Common myeloid progenitor, CD34-positive (primary cell): ENCODE measurements at regions of chr19 and their contacts with region 1.

Region 1: GRCh38 chr19:40662921-40663694 is 27.3 kb downstream of the NUMBL start:
- DNase-seq: peak; percentile 86 to 92 (median 91)
- H3K4me3 ChIP-seq: peak overlapping the region; percentile 61 to 84 (median 72)
- H3K27ac ChIP-seq: peak overlapping the region in 1 of 2 experiments; percentile 66
- H3K4me1 ChIP-seq: peaks cover 0 to 17% (median 12%) of the 10 kb centered on the region in 4 experiments
- H3K27me3 ChIP-seq: no peaks in the 10 kb centered on the region

Region 2: GRCh38 chr19:40677156-40677555 is 14.0 kb after region 1 on chr19:
- CTCF ChIA-PET with region 1: no interaction called
- POLR2A ChIA-PET with region 1: no interaction called
- DNase-seq: no peak
- H3K4me3 ChIP-seq: no peak overlapping the region
- H3K27ac ChIP-seq: no peak overlapping the region
- H3K4me1 ChIP-seq: peaks cover 0 to 4% (median 0%) of the 10 kb centered on the region in 4 experiments
- H3K27me3 ChIP-seq: no peaks in the 10 kb centered on the region

Region 3: DNA sequence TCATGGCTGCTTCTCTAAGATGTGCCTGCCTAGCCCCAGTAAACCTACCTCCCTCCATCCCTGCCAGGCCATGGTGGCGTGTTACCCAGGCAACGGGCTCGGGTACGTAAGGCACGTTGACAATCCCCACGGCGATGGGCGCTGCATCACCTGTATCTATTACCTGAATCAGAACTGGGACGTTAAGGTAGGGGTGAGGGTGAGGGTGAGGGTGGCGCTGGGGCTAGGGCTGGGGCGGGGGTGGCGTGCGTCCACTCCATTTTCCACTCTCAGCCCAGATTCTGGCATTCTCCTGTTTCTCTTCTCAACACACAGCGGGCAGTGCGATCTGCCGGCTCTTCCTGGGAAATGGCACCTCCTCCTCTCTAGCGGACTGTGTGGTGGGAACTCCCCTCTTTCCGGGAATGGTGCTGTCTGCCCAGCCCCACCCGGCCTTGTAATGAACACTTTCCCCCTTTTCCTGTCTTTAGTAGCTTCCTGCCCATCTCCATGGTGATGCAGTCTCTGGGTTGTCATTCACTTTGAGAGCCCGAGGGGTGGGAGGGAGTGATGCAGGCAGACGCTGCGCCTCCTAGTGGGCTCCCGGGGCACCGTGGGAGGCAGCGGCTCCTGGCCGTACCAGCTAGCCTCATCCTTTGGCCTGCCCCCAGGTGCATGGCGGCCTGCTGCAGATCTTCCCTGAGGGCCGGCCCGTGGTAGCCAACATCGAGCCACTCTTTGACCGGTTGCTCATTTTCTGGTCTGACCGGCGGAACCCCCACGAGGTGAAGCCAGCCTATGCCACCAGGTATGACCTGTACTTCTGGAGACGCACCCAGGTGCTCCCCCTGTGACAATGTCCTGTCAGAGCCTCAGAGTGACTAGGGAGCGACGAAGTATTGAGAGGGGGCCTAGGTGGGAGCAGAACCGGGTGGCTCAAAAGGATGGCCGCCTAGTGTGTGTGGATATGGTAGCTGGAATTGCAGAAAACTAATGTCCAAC is 143.7 kb after region 1 on chr19:
- CTCF ChIA-PET with region 1: interaction called, 20 read pairs
- POLR2A ChIA-PET with region 1: no interaction called
- DNase-seq: peak; percentile 78 to 85 (median 84)
- H3K4me3 ChIP-seq: peak overlapping the region in 3 of 7 experiments; percentile 2 to 58 (median 22)
- H3K27ac ChIP-seq: peak overlapping the region in 1 of 2 experiments; percentile 46
- H3K4me1 ChIP-seq: peaks cover 1 to 72% (median 65%) of the 10 kb centered on the region in 4 experiments
- H3K27me3 ChIP-seq: no peaks in the 10 kb centered on the region